Activated T-helper 2 cell treated with anti-CD3 and anti-CD28 coated beads, Interferon-gamma antibody, Interleukin-2, Interleukin-4, amounts not matched to agents 10 μg/mL and 5 μg/mL and 100 μg/mL, durations not matched to agents 14 hours and 24 hours and 36 hours (primary cell): ENCODE measurements at regions of chr11 and their contacts with region 1.

Region 1: DNA sequence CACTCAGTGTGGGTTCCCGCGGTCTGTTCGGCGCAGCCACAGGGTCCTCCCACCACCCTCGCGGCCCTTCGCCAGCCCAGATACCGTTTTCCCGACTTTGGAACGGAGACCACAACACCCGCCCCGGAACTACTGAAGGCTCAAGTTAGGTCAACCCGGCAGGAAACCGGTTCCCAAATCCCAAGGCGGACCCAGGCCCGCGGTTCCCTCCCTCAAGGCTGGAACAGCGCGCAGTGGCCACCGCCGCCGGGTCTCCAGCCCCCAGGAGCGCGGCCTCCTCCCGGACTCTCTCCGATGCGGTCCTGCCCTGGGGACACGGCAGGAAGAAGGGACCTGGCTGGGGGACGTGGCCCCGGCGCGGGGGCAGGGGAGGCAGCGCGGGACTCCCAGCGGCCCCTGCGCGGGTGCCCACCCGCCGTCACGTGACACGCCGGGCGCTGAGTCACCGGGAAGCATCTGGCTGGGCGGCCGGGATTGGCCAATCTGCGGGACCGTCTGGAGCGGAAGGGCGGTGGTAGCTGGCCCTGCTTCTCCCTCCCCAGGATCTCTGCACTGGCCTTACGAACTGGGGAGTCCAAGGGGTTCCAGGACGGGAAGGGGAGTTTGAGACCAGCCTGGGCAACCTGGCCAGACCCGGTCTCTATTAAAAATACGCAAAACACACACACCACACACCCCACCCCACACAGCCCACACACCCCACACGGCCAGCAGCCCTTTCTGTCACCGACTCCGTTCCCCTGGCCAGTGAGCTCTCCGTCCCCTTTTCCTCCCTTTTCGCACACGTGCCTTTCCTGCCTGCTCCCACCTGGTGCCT is 21.5 kb upstream of the MALAT1 start:
- DNase-seq: peak; percentile 87
- H3K4me3 Mint-ChIP-seq: peak overlapping the region; percentile 100
- H3K27ac Mint-ChIP-seq: peak overlapping the region; percentile 100
- H3K4me1 Mint-ChIP-seq: peaks cover 8% of the 10 kb centered on the region
- H3K27me3 Mint-ChIP-seq: no peaks in the 10 kb centered on the region

Region 2: DNA sequence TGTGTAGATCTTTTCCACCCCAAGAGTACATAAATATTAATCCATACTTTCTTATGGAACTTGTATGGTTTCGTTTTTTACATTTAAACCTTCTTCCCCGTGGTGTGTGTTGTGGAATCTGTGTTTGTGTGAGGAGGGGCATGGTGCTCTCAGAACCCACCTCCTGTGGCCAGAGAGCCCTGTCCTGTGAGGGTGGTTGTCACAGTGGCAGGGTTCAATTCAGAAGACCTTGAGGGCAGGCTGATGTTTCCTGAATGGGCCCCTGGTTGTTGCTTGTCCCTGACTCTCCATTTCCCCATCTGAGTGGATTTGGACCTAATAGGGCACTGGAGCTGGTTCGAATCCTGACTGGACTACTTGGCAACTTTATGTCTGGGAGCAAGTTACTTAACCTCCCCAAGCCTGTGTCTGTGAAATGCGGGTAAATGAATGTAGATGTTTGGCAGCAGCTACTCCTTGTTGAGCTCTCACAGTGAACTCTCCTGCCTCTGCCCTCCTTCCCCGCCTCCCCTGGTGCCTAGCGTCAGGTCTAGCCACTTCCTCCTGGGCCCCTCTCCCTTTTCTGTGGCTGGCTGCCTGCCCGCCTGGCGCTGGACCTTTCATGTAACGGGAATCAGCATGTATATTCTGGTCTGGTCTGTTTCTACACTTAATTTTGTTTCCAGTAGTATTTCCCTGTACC is 47.5 kb before region 1 on chr11:
- intact Hi-C with region 1: loop called (anchors 2 kb)
- DNase-seq: no peak
- H3K4me3 Mint-ChIP-seq: peak overlapping the region; percentile 98
- H3K27ac Mint-ChIP-seq: peak overlapping the region; percentile 94
- H3K4me1 Mint-ChIP-seq: peaks cover 78% of the 10 kb centered on the region
- H3K27me3 Mint-ChIP-seq: no peaks in the 10 kb centered on the region

Region 3: GRCh38 chr11:65540297-65541092 is 63.1 kb after region 1 on chr11:
- intact Hi-C with region 1: no loop called
- DNase-seq: peak; percentile 86
- H3K4me3 Mint-ChIP-seq: peak overlapping the region; percentile 81
- H3K27ac Mint-ChIP-seq: peak overlapping the region; percentile 70
- H3K4me1 Mint-ChIP-seq: peaks cover 18% of the 10 kb centered on the region
- H3K27me3 Mint-ChIP-seq: no peaks in the 10 kb centered on the region